ENCODE measurements at regions of chr12 and their contacts with region 1.

Region 1: DNA sequence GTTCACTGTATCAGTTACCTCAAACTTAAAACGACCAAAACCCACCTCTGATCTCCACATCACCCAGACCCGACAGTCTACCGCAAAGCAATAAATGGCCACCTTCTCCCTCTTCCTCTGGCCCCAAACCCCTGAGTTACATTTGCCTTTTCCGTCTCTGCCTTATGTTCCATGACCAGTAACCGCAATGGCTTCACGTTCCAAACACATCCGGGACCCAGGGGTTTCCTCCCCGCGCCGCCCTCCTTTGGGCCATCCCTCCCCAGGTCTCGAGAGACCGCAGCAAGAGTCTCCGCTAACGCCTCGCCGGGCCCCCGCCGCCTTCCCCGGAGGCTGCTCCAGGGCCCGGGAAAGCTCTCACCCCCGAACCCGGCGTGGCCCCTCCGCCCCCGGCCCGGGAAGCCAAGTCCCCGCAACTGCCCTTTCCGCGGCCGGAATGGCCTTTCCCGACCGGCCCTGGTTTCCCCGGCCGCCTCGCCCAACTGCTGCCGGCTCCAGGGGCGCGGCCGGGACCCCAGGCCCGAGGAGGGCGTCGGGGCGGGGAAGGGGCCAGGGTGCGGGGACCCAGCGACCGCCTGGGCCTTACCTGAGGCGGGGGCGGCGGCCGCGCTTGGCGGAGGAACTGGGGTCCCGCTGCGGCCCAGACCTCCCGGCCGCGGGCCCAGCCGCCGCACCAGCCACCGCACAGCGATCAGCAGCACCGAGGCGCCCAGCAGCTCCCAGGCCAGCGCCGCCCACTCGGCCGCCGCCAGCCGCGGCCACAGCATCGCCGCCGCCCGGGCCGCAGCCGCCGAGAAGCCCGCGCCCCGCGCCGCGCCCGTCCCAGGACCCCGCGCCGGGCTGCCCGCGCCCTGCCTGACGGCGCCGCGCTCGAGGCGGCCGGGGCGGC is at the start of gene ANKLE2:
- DNase-seq: peak; percentile 93
- H3K4me3 Mint-ChIP-seq: peak within 1 kb of the TSS; percentile 89
- H3K27ac Mint-ChIP-seq: peak within 1 kb of the TSS; percentile 96
- H3K4me1 Mint-ChIP-seq: peaks cover 18% of the 10 kb centered on the region
- H3K27me3 Mint-ChIP-seq: no peaks in the 10 kb centered on the region
- total RNA-seq, gene ANKLE2: 137 and 155 TPM in 2 replicates

Region 2: DNA sequence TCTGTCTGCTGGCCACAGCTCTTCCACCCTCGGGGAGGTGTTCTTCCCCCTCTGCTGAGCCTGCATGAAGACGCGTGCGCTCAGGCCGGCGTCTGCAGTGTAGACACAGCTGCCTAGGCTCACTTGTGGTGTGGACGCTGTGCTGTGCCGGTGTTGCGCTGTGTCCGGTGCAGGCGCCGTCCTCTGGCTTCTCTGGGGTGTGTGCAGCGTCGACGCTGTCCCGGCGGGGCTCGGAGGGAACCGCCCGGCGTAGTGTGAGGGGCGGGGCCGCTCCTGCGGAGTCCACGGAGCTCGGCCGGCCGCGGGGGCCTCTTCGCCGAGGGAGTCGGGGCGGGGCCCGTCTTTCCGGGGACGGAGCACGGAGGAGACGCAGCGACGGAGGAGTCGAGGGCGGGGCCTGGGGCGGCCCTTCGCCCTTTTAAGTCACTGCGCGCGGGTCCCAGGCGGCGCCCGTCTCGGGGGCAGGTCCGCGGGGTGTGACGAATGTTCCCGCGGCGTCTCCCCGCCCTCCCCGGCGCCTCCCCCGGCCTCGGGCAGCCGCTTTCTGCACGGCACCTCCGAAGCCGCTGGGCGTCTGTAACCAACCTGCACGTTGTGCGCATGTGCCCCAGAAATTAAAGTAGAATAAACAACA is 571.8 kb before region 1 on chr12:
- intact Hi-C with region 1: loop called (anchors 5 kb)
- DNase-seq: peak; percentile 98
- H3K4me3 Mint-ChIP-seq: peak overlapping the region; percentile 99
- H3K27ac Mint-ChIP-seq: peak overlapping the region; percentile 91
- H3K4me1 Mint-ChIP-seq: peaks cover 26% of the 10 kb centered on the region
- H3K27me3 Mint-ChIP-seq: peaks cover 2% of the 10 kb centered on the region

Region 3: GRCh38 chr12:132687208-132688164 is 73.8 kb before region 1 on chr12 and contains the starts of genes POLE and PXMP2:
- intact Hi-C with region 1: loop called (anchors 1 kb)
- DNase-seq: peak; percentile 98
- H3K4me3 Mint-ChIP-seq: peak within 1 kb of the TSS; percentile 85
- H3K27ac Mint-ChIP-seq: peak within 1 kb of the TSS; percentile 88
- H3K4me1 Mint-ChIP-seq: peaks cover 27% of the 10 kb centered on the region
- H3K27me3 Mint-ChIP-seq: no peaks in the 10 kb centered on the region
- total RNA-seq, gene POLE: 171 and 180 TPM in 2 replicates
- total RNA-seq, gene PXMP2: 24.4 and 24.6 TPM in 2 replicates

Region 4: GRCh38 chr12:132710422-132711168 is 50.7 kb before region 1 on chr12 and contains the start of gene PGAM5:
- intact Hi-C with region 1: loop called (anchors 2 kb)
- DNase-seq: peak; percentile 98
- H3K4me3 Mint-ChIP-seq: peak within 1 kb of the TSS; percentile 86
- H3K27ac Mint-ChIP-seq: peak within 1 kb of the TSS; percentile 80
- H3K4me1 Mint-ChIP-seq: peaks cover 18% of the 10 kb centered on the region
- H3K27me3 Mint-ChIP-seq: no peaks in the 10 kb centered on the region
- total RNA-seq, gene PGAM5: 104 and 110 TPM in 2 replicates

Region 5: GRCh38 chr12:132729541-132730320 is 31.5 kb before region 1 on chr12:
- intact Hi-C with region 1: no loop called
- DNase-seq: no peak
- H3K4me3 Mint-ChIP-seq: no peak overlapping the region
- H3K27ac Mint-ChIP-seq: peak overlapping the region; percentile 45
- H3K4me1 Mint-ChIP-seq: peaks cover 4% of the 10 kb centered on the region
- H3K27me3 Mint-ChIP-seq: no peaks in the 10 kb centered on the region

Region 6: DNA sequence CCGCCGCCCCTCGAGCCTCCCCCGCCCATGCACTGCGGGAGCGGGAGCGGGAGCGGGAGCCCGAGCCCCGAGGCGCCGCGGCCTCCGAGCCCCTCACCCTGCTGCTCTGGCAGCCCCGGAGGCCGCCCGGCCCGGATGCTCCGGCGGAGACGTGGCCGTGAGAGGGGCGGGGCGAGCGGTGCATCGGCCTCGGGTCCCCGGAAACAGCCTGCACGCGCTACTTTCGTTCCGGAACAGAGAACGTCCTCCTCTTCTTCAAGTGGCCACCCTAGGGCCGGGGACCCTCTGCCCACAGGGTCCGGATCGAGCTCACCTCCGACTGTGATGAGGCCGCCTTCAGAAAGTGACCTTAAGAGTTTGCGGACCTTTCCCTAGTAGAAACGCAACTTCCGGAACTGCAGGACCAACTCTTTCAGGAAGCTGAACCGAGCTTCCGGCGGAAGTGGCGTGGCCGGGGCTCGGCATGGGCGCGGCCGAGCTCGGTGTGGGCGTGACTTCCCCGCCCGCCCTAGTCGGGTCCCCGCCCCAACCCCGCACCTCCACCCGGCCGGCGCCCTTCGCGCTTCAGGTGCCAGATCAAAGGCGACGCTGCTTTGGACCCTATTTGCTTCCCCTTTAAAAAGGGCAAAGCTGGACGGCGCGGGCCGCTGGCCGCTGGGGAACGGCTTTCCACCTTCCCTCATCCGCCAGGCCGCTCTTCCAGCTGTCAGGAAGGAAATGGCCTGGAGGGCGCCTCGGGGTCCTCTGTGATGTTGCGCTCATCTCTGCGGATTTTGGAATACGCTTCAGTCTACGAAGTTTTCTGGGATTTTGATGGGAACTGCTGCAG is 67.6 kb after region 1 on chr12 and contains the start of gene GOLGA3:
- intact Hi-C with region 1: loop called (anchors 2 kb)
- DNase-seq: peak; percentile 98
- H3K4me3 Mint-ChIP-seq: peak within 1 kb of the TSS; percentile 98
- H3K27ac Mint-ChIP-seq: peak within 1 kb of the TSS; percentile 100
- H3K4me1 Mint-ChIP-seq: peaks cover 30% of the 10 kb centered on the region
- H3K27me3 Mint-ChIP-seq: no peaks in the 10 kb centered on the region
- total RNA-seq, gene GOLGA3: 67.6 and 68.1 TPM in 2 replicates

Region 7: GRCh38 chr12:132921685-132922084 is 160.4 kb after region 1 on chr12:
- intact Hi-C with region 1: no loop called
- DNase-seq: no peak
- H3K4me3 Mint-ChIP-seq: no peak overlapping the region
- H3K27ac Mint-ChIP-seq: no peak overlapping the region
- H3K4me1 Mint-ChIP-seq: no peaks in the 10 kb centered on the region
- H3K27me3 Mint-ChIP-seq: no peaks in the 10 kb centered on the region

Region 8: GRCh38 chr12:132956011-132956788 is 194.9 kb after region 1 on chr12 and contains the start of gene ZNF605:
- intact Hi-C with region 1: loop called (anchors 2 kb)
- DNase-seq: peak; percentile 96
- H3K4me3 Mint-ChIP-seq: peak within 1 kb of the TSS; percentile 98
- H3K27ac Mint-ChIP-seq: peak within 1 kb of the TSS; percentile 95
- H3K4me1 Mint-ChIP-seq: peaks cover 19% of the 10 kb centered on the region
- H3K27me3 Mint-ChIP-seq: no peaks in the 10 kb centered on the region
- total RNA-seq, gene ZNF605: 6.6 and 7.6 TPM in 2 replicates

Region 9: GRCh38 chr12:133156125-133156690 is 394.9 kb after region 1 on chr12:
- intact Hi-C with region 1: no loop called
- DNase-seq: no peak
- H3K4me3 Mint-ChIP-seq: no peak overlapping the region
- H3K27ac Mint-ChIP-seq: no peak overlapping the region
- H3K4me1 Mint-ChIP-seq: no peaks in the 10 kb centered on the region
- H3K27me3 Mint-ChIP-seq: no peaks in the 10 kb centered on the region

Measured in activated CD4-positive, alpha-beta T cell treated with anti-CD3 and anti-CD28 coated beads, Interleukin-2, amount 10 ng/mL, durations not matched to agents 24 days and 14 days (primary cell).